Activated B cell treated with CpG ODN at 0.5 μM for 24 hours (primary cell): ENCODE measurements at regions of chr6 and their contacts with region 1.

Region 1: GRCh38 chr6:90586836-90587638 is at the start of gene MAP3K7:
- DNase-seq: peak; percentile 91
- ATAC-seq: peak; percentile 86
- H3K4me3 Mint-ChIP-seq: peak within 1 kb of the TSS; percentile 94
- H3K27ac Mint-ChIP-seq: peak within 1 kb of the TSS; percentile 99
- H3K4me1 Mint-ChIP-seq: peaks cover 41% of the 10 kb centered on the region
- H3K27me3 Mint-ChIP-seq: peaks cover 7% of the 10 kb centered on the region
- CTCF ChIP-seq: no peak
- total RNA-seq, gene MAP3K7: 23.8 and 27.2 TPM in 2 replicates

Region 2: DNA sequence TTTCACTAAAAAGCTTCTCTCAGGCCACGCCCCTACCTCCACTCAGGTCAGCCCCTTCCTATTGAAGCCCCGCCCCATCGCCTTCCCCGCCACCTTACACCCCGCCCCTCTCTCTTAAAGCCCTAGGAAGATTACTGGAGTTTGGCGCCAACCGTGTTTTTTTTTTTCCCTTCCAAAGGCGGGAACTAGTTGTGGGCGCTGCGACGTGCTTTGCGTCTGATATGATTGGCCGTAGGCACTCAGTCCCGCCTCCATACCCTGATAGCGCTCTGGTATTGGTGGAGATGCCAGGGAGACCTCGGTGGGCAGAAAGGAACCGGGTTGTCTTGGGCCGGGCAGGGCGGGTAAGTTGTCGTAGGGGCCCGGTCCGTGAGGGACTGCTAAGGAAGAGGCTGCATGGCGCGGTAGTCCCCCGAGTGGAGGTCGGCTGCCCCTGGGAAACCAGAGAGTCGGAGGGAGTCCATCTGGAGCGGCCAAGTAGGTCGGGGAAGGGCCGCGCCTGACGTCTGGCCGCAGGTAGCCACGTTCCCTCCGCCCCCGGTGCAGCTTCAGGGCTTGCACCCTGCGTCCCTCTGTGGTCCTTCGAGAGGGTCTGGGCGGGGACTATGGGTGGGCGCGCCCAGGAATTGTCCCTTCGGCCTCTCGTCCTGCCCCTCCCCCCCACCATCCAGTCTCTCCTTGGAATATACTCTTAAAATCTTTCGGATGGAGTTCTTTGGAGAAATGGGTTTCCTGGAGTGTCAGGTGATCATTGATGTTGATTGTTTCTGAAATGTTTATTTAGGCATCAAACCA is 757.2 kb before region 1 on chr6 and contains the start of gene CASP8AP2:
- CTCF ChIA-PET with region 1: no interaction called
- POLR2A ChIA-PET with region 1: interaction called, 10 read pairs
- intact Hi-C with region 1: loop called (anchors 1 kb)
- DNase-seq: peak; percentile 76
- ATAC-seq: peak; percentile 93
- H3K4me3 Mint-ChIP-seq: peak within 1 kb of the TSS; percentile 99
- H3K27ac Mint-ChIP-seq: peak within 1 kb of the TSS; percentile 96
- H3K4me1 Mint-ChIP-seq: peaks cover 37% of the 10 kb centered on the region
- H3K27me3 Mint-ChIP-seq: no peaks in the 10 kb centered on the region
- CTCF ChIP-seq: no peak
- total RNA-seq, gene CASP8AP2: 17.1 and 17.8 TPM in 2 replicates

Region 3: DNA sequence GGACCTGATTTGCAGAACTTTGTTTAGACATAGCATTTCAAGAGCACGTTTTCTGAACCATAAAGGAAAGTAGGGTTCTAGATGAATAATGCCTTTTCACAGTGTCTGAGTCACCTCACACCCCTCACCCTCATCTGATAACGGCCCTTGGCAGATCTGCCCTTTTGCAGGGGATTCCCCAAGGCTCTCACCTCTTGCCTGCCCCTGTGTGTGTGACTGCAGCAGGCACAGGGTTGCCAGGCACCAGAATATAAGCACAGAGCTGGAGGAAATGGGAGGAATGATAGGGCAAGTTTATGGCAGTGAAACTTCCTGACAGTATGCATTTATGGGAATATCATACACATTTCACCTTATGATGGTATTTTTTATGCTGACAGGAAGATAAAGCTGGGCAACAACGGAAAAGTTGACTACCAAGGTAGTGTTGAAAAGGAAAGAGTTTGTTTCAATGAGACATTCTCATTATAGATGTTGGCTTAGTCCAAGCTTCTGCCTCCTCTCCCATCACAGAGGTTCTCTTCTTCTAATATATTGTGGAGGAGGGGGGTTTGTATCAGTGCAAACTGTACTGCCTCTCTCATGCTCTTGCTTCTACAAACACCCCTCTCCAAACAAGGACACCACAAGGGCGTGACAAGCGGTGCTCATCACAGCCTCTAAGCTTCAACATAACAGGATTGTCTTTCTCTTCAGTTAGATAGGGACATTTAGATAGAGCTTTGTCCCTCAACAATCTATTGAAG is 188.9 kb before region 1 on chr6:
- CTCF ChIA-PET with region 1: no interaction called
- POLR2A ChIA-PET with region 1: no interaction called
- intact Hi-C with region 1: no loop called
- DNase-seq: peak; percentile 36
- ATAC-seq: peak; percentile 97
- H3K4me3 Mint-ChIP-seq: peak overlapping the region; percentile 24
- H3K27ac Mint-ChIP-seq: peak overlapping the region; percentile 66
- H3K4me1 Mint-ChIP-seq: peaks cover 38% of the 10 kb centered on the region
- H3K27me3 Mint-ChIP-seq: no peaks in the 10 kb centered on the region
- CTCF ChIP-seq: no peak